ENCODE measurements at regions of chr1 and their contacts with region 1.

Region 1: DNA sequence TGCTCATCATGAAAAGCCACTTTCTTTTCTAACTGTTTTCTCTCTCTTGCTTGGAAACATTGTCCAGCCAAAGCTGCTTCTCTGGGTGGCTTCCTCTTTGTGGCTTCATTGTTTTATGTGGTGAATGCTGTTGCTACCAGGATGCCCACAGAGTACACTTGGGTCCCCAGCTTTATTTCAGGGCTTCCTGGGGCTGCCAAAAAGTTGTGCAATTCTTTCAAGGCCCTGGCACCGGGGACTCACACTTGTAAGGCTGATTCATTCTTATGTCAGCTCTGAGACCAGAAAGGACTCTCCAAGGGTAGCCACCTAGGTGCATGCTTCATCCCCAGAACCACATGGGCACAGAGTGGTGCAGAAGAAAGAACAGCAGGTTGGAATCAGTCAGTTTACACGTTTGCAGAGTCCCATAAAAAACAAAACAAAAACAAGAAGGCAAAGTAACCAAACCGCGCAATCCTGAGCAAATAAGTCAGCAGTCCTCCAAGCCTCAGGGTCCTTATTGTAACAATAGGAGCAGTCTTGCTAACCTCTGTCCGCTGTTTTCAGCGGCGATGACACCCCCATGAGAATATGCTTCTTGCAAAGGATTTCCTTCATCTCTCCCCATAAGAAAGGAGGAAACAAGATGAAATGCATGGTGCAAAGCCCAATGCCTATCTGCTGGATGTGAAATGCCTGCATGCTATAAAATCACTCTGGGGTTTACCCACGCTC is 89.9 kb upstream of the SSX2IP start:
- DNase-seq: peak; percentile 11 to 47 (median 16)
- H3K4me3 ChIP-seq: no peak overlapping the region
- H3K4me3 Mint-ChIP-seq: no peak overlapping the region
- H3K27ac ChIP-seq: no peak overlapping the region
- H3K27ac Mint-ChIP-seq: peak overlapping the region in 4 of 7 donors; percentile 54 to 77 (median 68)
- H3K4me1 ChIP-seq: peaks cover 14 to 18% of the 10 kb centered on the region in 2 donors
- H3K4me1 Mint-ChIP-seq: peaks cover 21% of the 10 kb centered on the region
- H3K27me3 ChIP-seq: no peaks in the 10 kb centered on the region
- H3K27me3 Mint-ChIP-seq: peaks cover 0 to 6% (median 3%) of the 10 kb centered on the region in 3 donors
- CTCF ChIP-seq: no peak

Region 2: GRCh38 chr1:84930329-84930728 is 150.2 kb after region 1 on chr1:
- intact Hi-C with region 1: loop called in 1 of 2 experiments (anchors 5 kb)
- DNase-seq: no peak
- H3K4me3 ChIP-seq: no peak overlapping the region
- H3K4me3 Mint-ChIP-seq: no peak overlapping the region
- H3K27ac ChIP-seq: no peak overlapping the region
- H3K27ac Mint-ChIP-seq: no peak overlapping the region
- H3K4me1 ChIP-seq: no peaks in the 10 kb centered on the region
- H3K4me1 Mint-ChIP-seq: no peaks in the 10 kb centered on the region
- H3K27me3 ChIP-seq: no peaks in the 10 kb centered on the region
- H3K27me3 Mint-ChIP-seq: peaks cover 0 to 3% (median 2%) of the 10 kb centered on the region in 3 donors
- CTCF ChIP-seq: no peak